ENCODE measurements at regions of chr19 and their contacts with region 1.

Region 1: GRCh38 chr19:51637362-51637978 is 7.3 kb upstream of the SIGLEC5 start:
- DNase-seq: no peak
- ATAC-seq: no peak
- H3K4me3 ChIP-seq: no peak overlapping the region
- H3K27ac ChIP-seq: no peak overlapping the region
- H3K4me1 ChIP-seq: no peaks in the 10 kb centered on the region
- H3K27me3 ChIP-seq: peaks cover 39% of the 10 kb centered on the region
- CTCF ChIP-seq: peak; percentile 32 to 70 (median 58); a peak in 5 of 6 replicates
- POLR2A ChIP-seq: no peak
- RAD21 ChIP-seq: peak; percentile 44

Region 2: DNA sequence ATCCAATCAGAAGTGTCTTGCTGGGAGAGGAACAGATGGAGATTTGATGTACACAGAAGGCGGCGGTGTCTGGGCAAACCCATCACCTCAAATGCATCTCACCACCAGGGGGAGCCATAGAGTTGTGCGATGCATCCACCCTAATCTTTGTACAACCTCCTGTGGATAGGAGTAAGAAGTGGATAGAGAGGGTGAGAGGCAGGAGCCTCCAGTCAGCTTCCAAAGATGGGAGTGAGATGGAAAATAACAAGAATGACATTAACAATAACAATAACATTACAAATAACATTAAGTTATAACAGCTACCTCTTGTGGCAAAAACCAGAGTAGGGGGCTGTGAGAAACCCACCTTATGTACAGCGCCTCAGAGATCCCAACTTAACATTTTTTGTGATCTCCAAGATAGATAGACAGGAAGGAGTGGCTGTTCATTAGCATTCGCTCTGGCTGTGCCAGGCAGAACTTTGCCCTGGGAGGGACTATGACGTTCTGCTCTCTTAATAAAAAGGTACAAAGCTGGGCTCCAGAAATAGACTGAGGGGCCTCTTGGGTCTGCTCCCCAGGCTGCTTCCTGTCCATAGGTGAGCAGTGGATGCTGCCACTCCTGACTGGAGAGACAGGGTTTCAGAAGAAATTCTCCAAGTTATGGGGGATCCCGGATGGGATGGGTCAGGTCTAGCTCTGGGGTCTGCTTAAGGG is 164.3 kb before region 1 on chr19:
- CTCF ChIA-PET with region 1: no interaction called
- POLR2A ChIA-PET with region 1: no interaction called
- RAD21 ChIA-PET with region 1: no interaction called
- intact Hi-C with region 1: loop called (anchors 2 kb)
- DNase-seq: peak; percentile 59
- ATAC-seq: peak; percentile 95
- H3K4me3 ChIP-seq: no peak overlapping the region
- H3K27ac ChIP-seq: no peak overlapping the region
- H3K4me1 ChIP-seq: peaks cover 4 to 13% of the 10 kb centered on the region in 2 experiments; a peak in 2 of 4 replicates
- H3K27me3 ChIP-seq: peaks cover 5% of the 10 kb centered on the region; the same call in 1 of the 2 replicates
- CTCF ChIP-seq: peak; percentile 79 to 85 (median 82)
- POLR2A ChIP-seq: no peak
- RAD21 ChIP-seq: peak; percentile 71

Region 3: GRCh38 chr19:51564791-51565190 is 72.7 kb before region 1 on chr19:
- CTCF ChIA-PET with region 1: no interaction called
- POLR2A ChIA-PET with region 1: no interaction called
- RAD21 ChIA-PET with region 1: no interaction called
- intact Hi-C with region 1: no loop called
- DNase-seq: no peak
- ATAC-seq: peak; percentile 52
- H3K4me3 ChIP-seq: no peak overlapping the region
- H3K27ac ChIP-seq: no peak overlapping the region
- H3K4me1 ChIP-seq: no peaks in the 10 kb centered on the region
- H3K27me3 ChIP-seq: peaks cover 44% of the 10 kb centered on the region
- CTCF ChIP-seq: peak in 1 of 3 experiments; percentile 25; a peak in 1 of 6 replicates
- POLR2A ChIP-seq: no peak
- RAD21 ChIP-seq: no peak